ENCODE measurements at regions of chr3 and their contacts with region 1.

Region 1: DNA sequence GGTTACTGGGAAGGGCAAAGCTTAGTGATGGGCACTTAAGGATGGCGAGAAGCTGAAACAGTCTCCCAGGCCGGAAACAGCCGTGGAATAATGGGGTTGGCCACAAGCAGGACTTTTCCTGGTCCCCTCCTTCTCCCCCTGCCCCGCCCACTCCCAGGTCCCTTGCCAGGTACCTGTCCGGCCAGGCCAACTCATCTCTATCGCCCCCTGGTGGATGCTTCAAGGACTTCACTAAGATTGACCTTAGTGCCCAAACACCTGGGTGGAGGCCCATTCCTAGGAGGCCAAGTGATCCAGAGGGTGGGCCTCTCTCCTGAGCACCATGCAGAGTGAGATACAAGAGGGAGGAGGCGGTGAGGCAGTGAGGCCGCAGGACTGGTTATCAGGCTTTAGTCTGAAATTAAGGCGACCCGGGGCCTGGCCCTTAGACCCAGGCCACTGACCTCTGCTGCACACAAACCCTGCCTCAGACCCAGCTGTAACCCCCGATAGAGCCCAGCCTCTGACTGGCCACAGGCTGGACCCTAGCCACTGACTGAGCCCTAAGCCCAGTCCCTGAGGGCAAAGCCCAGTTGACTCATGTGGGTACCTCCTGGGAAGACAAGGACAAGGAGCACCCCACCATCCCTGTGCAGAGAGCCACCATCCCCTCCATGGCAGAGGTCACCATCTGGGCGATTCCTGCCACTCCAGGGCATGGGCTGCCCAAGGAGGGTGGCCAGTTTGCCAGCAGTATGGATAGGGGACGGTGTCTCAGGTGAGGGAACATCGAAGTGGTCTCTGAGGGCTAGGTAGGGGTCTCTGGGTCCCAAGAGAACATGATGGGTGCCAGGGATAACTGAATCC is 37.6 kb downstream of the VIPR1 start:
- DNase-seq: peak; percentile 78
- H3K4me3 Mint-ChIP-seq: no peak overlapping the region
- H3K27ac Mint-ChIP-seq: no peak overlapping the region
- H3K4me1 Mint-ChIP-seq: peaks cover 5% of the 10 kb centered on the region
- H3K27me3 Mint-ChIP-seq: no peaks in the 10 kb centered on the region

Region 2: DNA sequence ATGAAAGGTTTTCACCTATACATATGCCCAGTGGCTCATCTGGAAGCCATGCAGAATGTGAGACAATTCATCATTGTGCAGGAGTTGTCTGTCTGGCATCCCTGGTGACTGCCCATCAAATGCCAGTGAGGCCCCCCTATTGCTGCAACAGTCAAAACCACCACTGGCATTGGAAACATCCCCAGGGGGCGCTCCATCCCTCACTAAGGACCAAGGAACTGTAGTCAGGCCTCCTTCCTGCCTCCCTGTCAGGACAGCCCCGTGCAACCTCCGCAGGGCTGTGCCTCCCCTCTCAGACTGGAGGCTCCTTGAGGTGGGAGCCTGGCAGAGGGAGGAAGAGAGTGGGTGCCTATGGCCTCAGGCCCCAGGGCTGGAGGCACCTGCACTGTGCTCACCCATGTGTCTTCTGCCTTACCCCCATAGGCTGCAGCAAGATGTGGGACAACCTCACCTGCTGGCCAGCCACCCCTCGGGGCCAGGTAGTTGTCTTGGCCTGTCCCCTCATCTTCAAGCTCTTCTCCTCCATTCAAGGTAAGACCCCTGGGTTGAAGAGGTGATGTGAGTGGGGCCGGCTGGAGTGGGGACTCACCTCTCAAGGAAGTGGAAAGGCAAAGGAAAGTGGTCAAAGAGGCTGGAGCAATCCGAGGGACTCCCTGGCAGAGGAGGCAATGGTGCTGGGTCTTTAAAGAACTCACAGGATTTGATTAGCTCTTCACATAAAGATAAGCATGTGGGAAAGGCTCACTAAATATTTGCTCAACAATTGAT is 21.1 kb before region 1 on chr3:
- CTCF ChIA-PET with region 1: interaction called, 15 read pairs
- intact Hi-C with region 1: loop called (anchors 1 kb)
- DNase-seq: peak; percentile 65
- H3K4me3 Mint-ChIP-seq: no peak overlapping the region
- H3K27ac Mint-ChIP-seq: peak overlapping the region; percentile 2
- H3K4me1 Mint-ChIP-seq: peaks cover 30% of the 10 kb centered on the region
- H3K27me3 Mint-ChIP-seq: no peaks in the 10 kb centered on the region

Region 3: GRCh38 chr3:42526616-42527367 is 13.3 kb before region 1 on chr3:
- CTCF ChIA-PET with region 1: interaction called, 79 read pairs
- intact Hi-C with region 1: no loop called
- DNase-seq: peak; percentile 70
- H3K4me3 Mint-ChIP-seq: no peak overlapping the region
- H3K27ac Mint-ChIP-seq: peak overlapping the region; percentile 69
- H3K4me1 Mint-ChIP-seq: peaks cover 64% of the 10 kb centered on the region
- H3K27me3 Mint-ChIP-seq: no peaks in the 10 kb centered on the region